Heart left ventricle (tissue), 16 donors: ENCODE measurements at regions of chr5 and their contacts with region 1.

Region 1: GRCh38 chr5:142145106-142145900 is 36.7 kb downstream of the NDFIP1 start:
- DNase-seq: peak in 4 of 5 donors; percentile 60 to 70 (median 66)
- ATAC-seq: peak; percentile 67 to 88 (median 84)
- H3K4me3 ChIP-seq: no peak overlapping the region
- H3K27ac ChIP-seq: no peak overlapping the region
- H3K4me1 ChIP-seq: peaks cover 0 to 5% (median 0%) of the 10 kb centered on the region in 12 donors
- H3K27me3 ChIP-seq: no peaks in the 10 kb centered on the region
- CTCF ChIP-seq: peak; percentile 54 to 79 (median 69)
- POLR2A ChIP-seq: no peak

Region 2: GRCh38 chr5:141691867-141692532 is 453.3 kb before region 1 on chr5:
- intact Hi-C with region 1: loop called in 4 of 10 experiments (anchors 5 to 10 kb)
- DNase-seq: peak; percentile 85 to 93 (median 87)
- ATAC-seq: peak; percentile 79 to 91 (median 90)
- H3K4me3 ChIP-seq: peak overlapping the region in 11 of 12 donors; percentile 11 to 51 (median 37)
- H3K27ac ChIP-seq: no peak overlapping the region
- H3K4me1 ChIP-seq: peaks cover 0 to 28% (median 10%) of the 10 kb centered on the region in 12 donors
- H3K27me3 ChIP-seq: peaks cover 0 to 3% (median 0%) of the 10 kb centered on the region in 9 donors
- CTCF ChIP-seq: peak; percentile 98 to 100 (median 99)
- POLR2A ChIP-seq: no peak

Region 3: GRCh38 chr5:141992349-141992963 is 152.8 kb before region 1 on chr5:
- intact Hi-C with region 1: loop called (anchors 1 to 5 kb)
- DNase-seq: peak in 4 of 5 donors; percentile 54 to 65 (median 65)
- ATAC-seq: peak; percentile 59 to 78 (median 72)
- H3K4me3 ChIP-seq: no peak overlapping the region
- H3K27ac ChIP-seq: peak overlapping the region in 1 of 12 donors; percentile 11
- H3K4me1 ChIP-seq: peaks cover 0 to 16% (median 6%) of the 10 kb centered on the region in 12 donors
- H3K27me3 ChIP-seq: no peaks in the 10 kb centered on the region
- CTCF ChIP-seq: peak; percentile 71 to 91 (median 80)
- POLR2A ChIP-seq: no peak

Region 4: GRCh38 chr5:142012792-142013388 is 132.4 kb before region 1 on chr5 and contains the start of gene GNPDA1:
- intact Hi-C with region 1: loop called in 6 of 10 experiments (anchors 5 kb)
- DNase-seq: peak; percentile 85 to 90 (median 88)
- ATAC-seq: peak; percentile 74 to 94 (median 90)
- H3K4me3 ChIP-seq: peak within 1 kb of the TSS; percentile 42 to 98 (median 78)
- H3K27ac ChIP-seq: peak within 1 kb of the TSS; percentile 47 to 94 (median 85)
- H3K4me1 ChIP-seq: peaks cover 0 to 53% (median 15%) of the 10 kb centered on the region in 12 donors
- H3K27me3 ChIP-seq: no peaks in the 10 kb centered on the region
- CTCF ChIP-seq: peak in 5 of 12 donors; percentile 8 to 39 (median 31)
- POLR2A ChIP-seq: peak in 1 of 2 donors; percentile 39
- total RNA-seq, gene GNPDA1: 14.1 to 43.0 (median 26.1) TPM